Activated CD4-positive, alpha-beta T cell treated with anti-CD3 and anti-CD28 coated beads, Interleukin-2, amount 10 ng/mL, durations not matched to agents 24 days and 14 days (primary cell): ENCODE measurements at regions of chr3 and their contacts with region 1.

Region 1: GRCh38 chr3:32947789-32948238 is 3.6 kb upstream of the CCR4 start:
- DNase-seq: peak; percentile 97
- H3K4me3 Mint-ChIP-seq: no peak overlapping the region
- H3K27ac Mint-ChIP-seq: peak overlapping the region; percentile 69
- H3K4me1 Mint-ChIP-seq: peaks cover 35% of the 10 kb centered on the region
- H3K27me3 Mint-ChIP-seq: no peaks in the 10 kb centered on the region

Region 2: GRCh38 chr3:32930161-32930560 is 17.7 kb before region 1 on chr3:
- intact Hi-C with region 1: no loop called
- DNase-seq: no peak
- H3K4me3 Mint-ChIP-seq: no peak overlapping the region
- H3K27ac Mint-ChIP-seq: no peak overlapping the region
- H3K4me1 Mint-ChIP-seq: no peaks in the 10 kb centered on the region
- H3K27me3 Mint-ChIP-seq: peaks cover 21% of the 10 kb centered on the region

Region 3: GRCh38 chr3:32960404-32961170 is 12.8 kb after region 1 on chr3:
- intact Hi-C with region 1: loop called (anchors 1 kb)
- DNase-seq: no peak
- H3K4me3 Mint-ChIP-seq: peak overlapping the region; percentile 68
- H3K27ac Mint-ChIP-seq: peak overlapping the region; percentile 96
- H3K4me1 Mint-ChIP-seq: peaks cover 46% of the 10 kb centered on the region
- H3K27me3 Mint-ChIP-seq: no peaks in the 10 kb centered on the region

Region 4: DNA sequence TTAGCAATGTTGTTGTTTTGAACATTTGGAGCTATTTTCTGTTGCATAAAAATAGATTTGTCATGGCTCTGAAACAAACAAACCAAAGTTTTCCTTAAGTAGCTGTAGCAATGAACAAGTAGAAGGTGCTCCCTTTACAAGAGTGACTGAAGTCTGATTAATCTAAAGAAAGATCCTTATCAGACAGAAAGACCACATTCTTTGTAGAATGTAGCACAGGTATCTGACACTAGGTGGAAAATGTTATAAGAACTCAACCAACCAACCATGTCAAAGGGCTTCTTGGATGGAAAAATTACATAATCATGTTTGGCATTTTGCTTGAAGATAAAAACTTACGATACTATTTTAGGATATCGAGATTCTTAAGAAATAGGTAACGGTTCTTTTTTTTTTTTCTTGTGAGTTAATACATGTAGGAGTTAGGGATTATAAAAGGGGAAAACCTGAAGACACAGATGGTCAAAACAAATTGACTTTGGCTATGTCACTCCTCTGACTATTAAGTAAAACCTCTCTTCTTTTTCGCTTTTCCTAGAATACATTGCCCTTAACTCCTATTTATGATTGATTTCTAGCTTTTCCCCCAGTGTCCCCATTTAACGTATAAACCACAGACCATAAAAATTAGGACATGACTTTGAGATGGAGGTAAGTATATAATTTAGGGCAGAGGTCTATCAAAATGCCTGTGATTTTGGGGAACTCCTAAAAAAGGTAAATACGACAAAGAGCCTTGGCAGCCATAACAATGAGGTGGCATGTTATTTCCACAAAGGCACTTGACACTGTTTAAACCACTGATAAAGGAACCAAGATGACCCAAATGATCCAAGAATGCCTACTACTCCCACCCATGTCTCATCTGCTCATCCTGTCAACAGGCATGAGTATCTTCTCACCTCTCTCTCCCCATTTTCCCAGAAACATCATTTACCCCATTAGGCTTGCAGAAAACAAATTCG is 75.6 kb after region 1 on chr3:
- intact Hi-C with region 1: loop called (anchors 1 kb)
- DNase-seq: no peak
- H3K4me3 Mint-ChIP-seq: peak overlapping the region; percentile 59
- H3K27ac Mint-ChIP-seq: peak overlapping the region; percentile 95
- H3K4me1 Mint-ChIP-seq: peaks cover 48% of the 10 kb centered on the region
- H3K27me3 Mint-ChIP-seq: no peaks in the 10 kb centered on the region

Region 5: GRCh38 chr3:33030802-33031201 is 83.0 kb after region 1 on chr3:
- intact Hi-C with region 1: loop called (anchors 1 kb)
- DNase-seq: peak; percentile 82
- H3K4me3 Mint-ChIP-seq: no peak overlapping the region
- H3K27ac Mint-ChIP-seq: peak overlapping the region; percentile 45
- H3K4me1 Mint-ChIP-seq: peaks cover 25% of the 10 kb centered on the region
- H3K27me3 Mint-ChIP-seq: no peaks in the 10 kb centered on the region

Region 6: DNA sequence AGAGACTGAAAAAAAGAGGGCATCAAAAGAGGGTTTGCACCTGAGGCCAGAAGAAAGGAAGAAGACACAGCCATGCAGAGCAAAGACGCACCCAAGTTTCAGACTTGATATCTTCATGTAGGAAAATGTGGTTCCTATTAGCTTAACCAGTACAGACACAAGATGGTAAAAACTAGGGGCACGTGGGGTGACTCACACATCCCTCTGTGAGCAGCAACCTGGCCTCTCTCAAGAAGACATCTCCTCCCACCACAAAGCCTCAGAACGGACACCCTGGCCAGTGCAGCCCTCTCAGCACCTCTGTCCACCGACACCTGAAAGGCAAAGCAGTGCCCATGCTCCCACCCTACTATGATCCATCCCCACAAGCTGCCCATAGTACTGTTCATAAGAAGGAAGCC is 115.8 kb after region 1 on chr3:
- intact Hi-C with region 1: loop called (anchors 1 kb)
- DNase-seq: peak; percentile 85
- H3K4me3 Mint-ChIP-seq: peak overlapping the region; percentile 59
- H3K27ac Mint-ChIP-seq: peak overlapping the region; percentile 93
- H3K4me1 Mint-ChIP-seq: peaks cover 59% of the 10 kb centered on the region
- H3K27me3 Mint-ChIP-seq: no peaks in the 10 kb centered on the region

Region 7: GRCh38 chr3:33074217-33075067 is 126.6 kb after region 1 on chr3:
- intact Hi-C with region 1: loop called (anchors 1 kb)
- DNase-seq: peak; percentile 89
- H3K4me3 Mint-ChIP-seq: no peak overlapping the region
- H3K27ac Mint-ChIP-seq: peak overlapping the region; percentile 64
- H3K4me1 Mint-ChIP-seq: peaks cover 25% of the 10 kb centered on the region
- H3K27me3 Mint-ChIP-seq: no peaks in the 10 kb centered on the region

Region 8: GRCh38 chr3:33372218-33373081 is 424.6 kb after region 1 on chr3:
- intact Hi-C with region 1: loop called (anchors 1 kb)
- DNase-seq: peak; percentile 82
- H3K4me3 Mint-ChIP-seq: no peak overlapping the region
- H3K27ac Mint-ChIP-seq: no peak overlapping the region
- H3K4me1 Mint-ChIP-seq: peaks cover 5% of the 10 kb centered on the region
- H3K27me3 Mint-ChIP-seq: peaks cover 7% of the 10 kb centered on the region